ENCODE measurements at regions of chr3 and their contacts with region 1.

Region 1: GRCh38 chr3:115040673-115041286 is 106.3 kb downstream of the ZBTB20 start:
- DNase-seq: no peak
- H3K4me3 Mint-ChIP-seq: no peak overlapping the region
- H3K27ac Mint-ChIP-seq: no peak overlapping the region
- H3K4me1 Mint-ChIP-seq: no peaks in the 10 kb centered on the region
- H3K27me3 Mint-ChIP-seq: no peaks in the 10 kb centered on the region

Region 2: DNA sequence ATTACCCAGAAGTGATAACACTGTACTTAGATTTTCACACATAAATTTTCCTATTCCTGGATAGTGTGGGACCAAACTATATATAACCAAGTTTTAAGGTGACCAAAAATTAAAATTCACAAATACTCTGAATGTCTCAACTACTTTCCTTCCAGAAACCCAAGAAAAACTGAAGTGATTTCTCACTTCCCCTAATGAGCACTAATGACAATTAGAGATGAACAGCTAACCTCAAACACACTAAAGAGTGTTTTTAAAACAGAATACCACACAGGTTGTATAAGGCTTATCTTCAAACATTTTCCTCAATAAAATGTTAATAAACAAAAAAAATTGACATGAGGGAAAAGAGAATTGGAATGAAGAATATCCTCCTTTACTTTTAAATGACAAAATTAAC is 81.8 kb before region 1 on chr3:
- intact Hi-C with region 1: no loop called
- DNase-seq: no peak
- H3K4me3 Mint-ChIP-seq: no peak overlapping the region
- H3K27ac Mint-ChIP-seq: no peak overlapping the region
- H3K4me1 Mint-ChIP-seq: no peaks in the 10 kb centered on the region
- H3K27me3 Mint-ChIP-seq: no peaks in the 10 kb centered on the region

Region 3: GRCh38 chr3:115169808-115170207 is 129.0 kb after region 1 on chr3:
- intact Hi-C with region 1: loop called (anchors 5 kb)
- DNase-seq: no peak
- H3K4me3 Mint-ChIP-seq: no peak overlapping the region
- H3K27ac Mint-ChIP-seq: no peak overlapping the region
- H3K4me1 Mint-ChIP-seq: peaks cover 13% of the 10 kb centered on the region
- H3K27me3 Mint-ChIP-seq: peaks cover 10% of the 10 kb centered on the region

Region 4: DNA sequence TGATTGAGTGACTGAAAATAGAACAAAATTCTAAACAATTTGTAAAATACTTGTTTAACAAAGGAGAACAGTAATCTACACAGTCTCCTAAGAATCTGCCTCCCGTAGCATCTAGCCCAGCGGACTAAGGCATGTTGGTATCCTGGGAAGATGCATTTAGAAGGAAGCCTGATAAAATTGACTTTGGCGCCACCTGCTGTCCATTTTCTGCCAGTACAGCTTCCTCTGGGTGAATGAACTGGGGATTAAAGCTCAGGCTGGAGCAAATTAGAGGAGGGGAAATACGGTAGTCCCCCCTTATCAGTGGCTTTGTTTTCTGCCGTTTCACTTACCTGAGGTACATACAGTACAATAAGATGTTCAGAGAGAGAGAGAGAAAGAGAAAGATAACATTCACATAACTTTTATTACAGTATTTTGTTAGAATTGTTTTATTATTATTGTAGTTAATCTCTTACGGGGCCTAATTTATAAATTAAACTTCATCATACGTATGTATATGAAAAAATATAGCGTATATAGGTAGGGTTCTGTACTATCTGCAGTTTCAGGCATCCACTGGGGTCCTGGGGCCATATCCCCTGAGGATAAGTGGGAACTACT is 774.1 kb after region 1 on chr3:
- intact Hi-C with region 1: loop called (anchors 2 kb)
- DNase-seq: peak; percentile 33
- H3K4me3 Mint-ChIP-seq: no peak overlapping the region
- H3K27ac Mint-ChIP-seq: no peak overlapping the region
- H3K4me1 Mint-ChIP-seq: peaks cover 4% of the 10 kb centered on the region
- H3K27me3 Mint-ChIP-seq: peaks cover 6% of the 10 kb centered on the region

Measured in activated T-helper 1 cell treated with anti-CD3 and anti-CD28 coated beads, Interleukin-12 subunit alpha, Interleukin-12 subunit beta, Interleukin-2, Interleukin-4 antibody, amounts not matched to agents 30 ng/mL and 10 ng/mL and 1 ng/mL, durations not matched to agents 14 hours and 24 hours and 36 hours (primary cell).